Posterior vena cava (tissue), 2 donors: ENCODE measurements at regions of chr16 and their contacts with region 1.

Region 1: GRCh38 chr16:89395141-89395874 is 95.1 kb downstream of the ANKRD11 start:
- DNase-seq: peak; percentile 91

Region 2: DNA sequence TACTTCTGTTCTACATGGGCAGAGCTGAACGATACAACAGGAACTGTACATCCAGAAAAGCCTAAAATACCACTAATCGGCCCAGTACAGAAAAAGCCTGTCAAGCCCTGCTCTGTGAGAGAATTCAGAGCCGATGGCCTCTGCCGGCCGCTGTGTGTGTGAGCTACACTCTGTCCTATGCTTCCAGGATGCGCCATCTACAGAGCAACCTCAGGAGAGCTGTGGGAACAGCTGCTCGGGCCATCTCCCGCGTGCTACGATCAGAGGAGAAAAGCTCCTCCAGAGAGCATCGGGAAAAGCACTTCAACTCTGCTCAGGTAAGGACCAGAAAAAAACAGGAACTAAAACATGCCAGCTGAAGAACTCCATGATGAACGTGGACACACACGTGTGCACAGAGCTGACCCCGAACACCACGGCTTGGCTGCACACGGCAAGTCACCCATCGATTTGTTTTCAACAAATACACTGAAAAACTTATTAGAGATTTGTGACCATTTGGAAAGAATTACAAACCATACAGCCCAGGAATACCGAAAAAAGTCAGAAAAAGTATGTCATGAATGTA is 20.8 kb before region 1 on chr16:
- intact Hi-C with region 1: loop called in 1 of 2 experiments (anchors 1 kb)
- DNase-seq: no peak